Endothelial cell of umbilical vein (primary cell): ENCODE measurements at regions of chrX and their contacts with region 1.

Region 1: GRCh38 chrX:69285881-69286564 is 120.8 kb upstream of the PJA1 start:
- DNase-seq: no peak
- H3K4me3 ChIP-seq: peak overlapping the region in 1 of 3 experiments; percentile 33
- H3K27ac ChIP-seq: no peak overlapping the region
- H3K4me1 ChIP-seq: peaks cover 3% of the 10 kb centered on the region
- H3K27me3 ChIP-seq: no peaks in the 10 kb centered on the region
- CTCF ChIP-seq: peak; percentile 61 to 86
- POLR2A ChIP-seq: no peak

Region 2: DNA sequence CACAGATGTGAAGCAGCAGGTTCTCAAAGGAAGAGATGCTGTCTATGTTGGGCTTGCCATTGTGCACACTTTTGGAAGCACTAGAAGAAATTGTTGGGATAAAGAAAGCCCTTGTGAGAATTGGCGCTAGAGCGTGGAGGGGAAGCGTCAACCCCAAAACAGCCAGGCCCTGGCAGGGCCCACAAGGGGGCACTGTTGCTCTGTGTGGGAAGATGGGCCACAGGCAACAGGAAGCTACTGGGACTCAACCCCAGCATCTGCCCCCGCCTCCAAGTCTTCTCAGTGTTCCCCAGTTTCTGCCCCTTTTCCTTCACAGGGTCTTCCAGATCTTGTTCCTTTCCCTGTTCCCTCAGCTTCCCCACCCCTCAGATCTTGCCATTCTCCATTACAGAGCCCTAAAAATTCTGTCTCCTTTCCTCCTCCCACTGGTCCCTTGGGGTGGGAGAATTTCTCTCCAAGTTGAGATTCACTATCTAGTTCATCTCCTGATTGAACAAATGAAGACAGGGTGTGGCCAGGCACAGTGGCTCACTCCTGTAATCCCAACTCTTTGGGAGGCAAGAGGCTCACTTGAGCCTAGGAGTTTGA is 553.0 kb before region 1 on chrX:
- CTCF ChIA-PET with region 1: interaction called, 8 read pairs
- POLR2A ChIA-PET with region 1: no interaction called
- dilution Hi-C with region 1: no loop called
- intact Hi-C with region 1: loop called (anchors 1 kb)
- DNase-seq: peak; percentile 12
- H3K4me3 ChIP-seq: no peak overlapping the region
- H3K27ac ChIP-seq: no peak overlapping the region
- H3K4me1 ChIP-seq: no peaks in the 10 kb centered on the region
- H3K27me3 ChIP-seq: no peaks in the 10 kb centered on the region
- CTCF ChIP-seq: peak; percentile 58 to 69
- POLR2A ChIP-seq: no peak

Region 3: GRCh38 chrX:68822641-68823410 is 463.2 kb before region 1 on chrX:
- CTCF ChIA-PET with region 1: interaction called, 33 read pairs
- POLR2A ChIA-PET with region 1: no interaction called
- dilution Hi-C with region 1: no loop called
- intact Hi-C with region 1: loop called (anchors 1 kb)
- DNase-seq: peak; percentile 28
- H3K4me3 ChIP-seq: no peak overlapping the region
- H3K27ac ChIP-seq: no peak overlapping the region
- H3K4me1 ChIP-seq: no peaks in the 10 kb centered on the region
- H3K27me3 ChIP-seq: peaks cover 0 to 2% of the 10 kb centered on the region in 2 experiments
- CTCF ChIP-seq: peak; percentile 39 to 56
- POLR2A ChIP-seq: no peak

Region 4: DNA sequence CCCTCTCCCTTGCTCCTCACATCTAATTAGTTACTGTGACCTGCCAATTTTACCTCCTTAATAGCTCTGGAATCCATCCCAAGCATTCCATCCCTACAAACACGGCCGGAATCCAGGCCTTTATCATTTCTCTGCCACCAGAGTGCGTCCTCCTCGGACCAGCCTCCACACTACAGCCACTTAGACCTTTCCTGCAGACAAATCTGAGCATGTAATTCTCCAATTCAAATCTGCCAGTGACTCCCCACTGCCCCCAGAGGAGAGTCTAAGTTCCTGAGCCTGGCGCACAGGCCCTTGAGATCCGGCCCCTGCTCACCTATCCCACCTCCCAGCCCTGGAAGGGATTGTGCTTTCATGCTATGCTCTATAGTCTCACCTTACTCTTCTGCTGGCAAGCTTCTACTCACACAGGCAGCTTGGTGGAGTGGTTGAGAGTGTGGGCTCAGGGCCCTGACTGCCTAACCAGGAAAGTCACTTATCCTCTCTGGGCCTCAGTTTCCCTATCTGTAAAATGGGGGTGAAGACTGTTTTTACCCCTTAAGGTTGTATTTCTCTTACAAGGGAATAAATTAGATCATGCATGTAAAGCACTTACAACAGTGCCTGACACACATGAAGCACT is 152.0 kb before region 1 on chrX:
- CTCF ChIA-PET with region 1: no interaction called
- POLR2A ChIA-PET with region 1: no interaction called
- dilution Hi-C with region 1: no loop called
- intact Hi-C with region 1: loop called (anchors 10 kb)
- DNase-seq: peak; percentile 30
- H3K4me3 ChIP-seq: no peak overlapping the region
- H3K27ac ChIP-seq: no peak overlapping the region
- H3K4me1 ChIP-seq: no peaks in the 10 kb centered on the region
- H3K27me3 ChIP-seq: peaks cover 2 to 14% of the 10 kb centered on the region in 2 experiments
- CTCF ChIP-seq: peak; percentile 25 to 49
- POLR2A ChIP-seq: no peak

Region 5: DNA sequence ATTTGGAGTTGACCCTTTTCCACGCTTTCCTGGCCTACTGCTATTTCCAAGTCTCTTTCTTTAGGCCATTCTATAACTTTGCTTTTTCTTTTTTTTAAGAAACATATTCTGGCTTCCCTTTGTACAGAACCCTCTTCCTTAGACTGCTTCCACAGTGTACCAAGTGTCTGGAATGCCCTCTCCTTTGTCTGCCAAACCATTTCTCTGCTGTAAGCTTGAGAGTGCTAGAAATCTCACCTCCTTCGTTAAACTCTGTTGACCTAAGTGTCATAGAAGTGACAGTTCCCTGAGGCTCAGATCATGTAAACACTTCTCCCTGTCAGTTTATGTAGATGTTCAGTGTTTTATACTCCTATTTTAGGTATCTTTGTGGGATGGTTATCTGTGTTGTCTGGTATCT is 438.3 kb after region 1 on chrX:
- CTCF ChIA-PET with region 1: no interaction called
- POLR2A ChIA-PET with region 1: no interaction called
- dilution Hi-C with region 1: no loop called
- intact Hi-C with region 1: no loop called
- DNase-seq: no peak
- H3K4me3 ChIP-seq: no peak overlapping the region
- H3K27ac ChIP-seq: no peak overlapping the region
- H3K4me1 ChIP-seq: no peaks in the 10 kb centered on the region
- H3K27me3 ChIP-seq: no peaks in the 10 kb centered on the region
- CTCF ChIP-seq: no peak
- POLR2A ChIP-seq: no peak